Activated T-helper 2 cell treated with anti-CD3 and anti-CD28 coated beads, Interferon-gamma antibody, Interleukin-2, Interleukin-4, amounts not matched to agents 10 μg/mL and 5 μg/mL and 100 μg/mL, durations not matched to agents 14 hours and 24 hours and 36 hours (primary cell): ENCODE measurements at regions of chr19 and their contacts with region 1.

Region 1: DNA sequence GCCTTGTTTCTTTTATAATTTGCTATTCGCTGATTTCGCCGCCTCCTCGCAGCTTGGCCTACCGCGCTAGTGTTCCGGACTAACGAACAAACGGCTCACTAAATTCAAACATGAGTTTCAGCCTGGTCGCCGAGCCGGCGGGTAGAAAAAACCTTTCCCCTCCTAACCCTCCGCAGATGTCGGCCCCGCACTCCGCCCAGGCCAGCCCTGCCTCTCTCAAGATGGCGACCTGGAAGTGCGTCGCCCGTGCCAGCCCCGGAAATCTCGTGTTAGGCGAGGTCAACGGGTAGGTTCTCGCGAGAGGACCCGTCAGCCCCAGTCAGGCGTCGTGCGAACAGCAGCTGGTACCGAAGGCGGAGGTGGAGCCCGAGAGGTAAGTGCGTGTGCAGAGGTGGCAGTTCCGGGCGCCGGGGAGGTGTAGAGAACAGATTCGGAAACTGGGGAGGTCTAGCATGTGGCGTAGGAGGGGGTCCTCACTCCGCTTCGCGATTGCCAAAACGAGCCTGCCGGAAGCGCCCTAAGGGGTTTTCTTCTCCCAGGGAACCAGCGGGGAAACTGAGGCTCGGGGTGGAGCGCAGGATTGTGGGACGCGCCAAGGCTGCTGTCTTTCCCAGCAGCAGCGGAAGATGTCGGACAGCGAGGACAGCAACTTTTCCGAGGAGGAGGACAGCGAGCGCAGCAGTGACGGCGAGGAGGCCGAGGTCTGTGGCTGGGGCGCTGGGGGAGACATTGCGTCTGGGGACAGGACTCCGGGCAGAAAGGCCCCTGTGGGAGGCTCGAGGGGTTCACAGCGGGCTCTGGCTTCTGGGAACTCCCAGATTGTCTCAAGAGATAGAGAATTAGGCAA is at the start of gene SUPT5H:
- DNase-seq: peak; percentile 98
- H3K4me3 Mint-ChIP-seq: peak within 1 kb of the TSS; percentile 95
- H3K27ac Mint-ChIP-seq: peak within 1 kb of the TSS; percentile 94
- H3K4me1 Mint-ChIP-seq: peaks cover 34% of the 10 kb centered on the region
- H3K27me3 Mint-ChIP-seq: no peaks in the 10 kb centered on the region
- total RNA-seq, gene SUPT5H: 163 and 169 TPM in 2 replicates

Region 2: GRCh38 chr19:39351537-39352064 is 93.9 kb before region 1 on chr19:
- intact Hi-C with region 1: no loop called
- DNase-seq: peak; percentile 52
- H3K4me3 Mint-ChIP-seq: no peak overlapping the region
- H3K27ac Mint-ChIP-seq: peak overlapping the region; percentile 91
- H3K4me1 Mint-ChIP-seq: peaks cover 38% of the 10 kb centered on the region
- H3K27me3 Mint-ChIP-seq: no peaks in the 10 kb centered on the region

Region 3: GRCh38 chr19:39412100-39412866 is 33.2 kb before region 1 on chr19 and contains the start of gene PLEKHG2:
- intact Hi-C with region 1: no loop called
- DNase-seq: peak; percentile 96
- H3K4me3 Mint-ChIP-seq: peak within 1 kb of the TSS; percentile 97
- H3K27ac Mint-ChIP-seq: peak within 1 kb of the TSS; percentile 90
- H3K4me1 Mint-ChIP-seq: peaks cover 38% of the 10 kb centered on the region
- H3K27me3 Mint-ChIP-seq: no peaks in the 10 kb centered on the region
- total RNA-seq, gene PLEKHG2: 49.8 and 50.7 TPM in 2 replicates

Region 4: GRCh38 chr19:39480337-39481228 is 35.1 kb after region 1 on chr19 and contains the start of gene TIMM50:
- intact Hi-C with region 1: loop called (anchors 2 kb)
- DNase-seq: peak; percentile 96
- H3K4me3 Mint-ChIP-seq: peak within 1 kb of the TSS; percentile 97
- H3K27ac Mint-ChIP-seq: peak within 1 kb of the TSS; percentile 84
- H3K4me1 Mint-ChIP-seq: peaks cover 24% of the 10 kb centered on the region
- H3K27me3 Mint-ChIP-seq: no peaks in the 10 kb centered on the region
- total RNA-seq, gene TIMM50: 110 and 115 TPM in 2 replicates

Region 5: GRCh38 chr19:39539519-39540332 is 94.2 kb after region 1 on chr19 and contains the start of gene EID2:
- intact Hi-C with region 1: loop called (anchors 1 kb)
- DNase-seq: peak; percentile 93
- H3K4me3 Mint-ChIP-seq: peak within 1 kb of the TSS; percentile 94
- H3K27ac Mint-ChIP-seq: peak within 1 kb of the TSS; percentile 93
- H3K4me1 Mint-ChIP-seq: peaks cover 25% of the 10 kb centered on the region
- H3K27me3 Mint-ChIP-seq: no peaks in the 10 kb centered on the region
- total RNA-seq, gene EID2: 17.2 and 18.3 TPM in 2 replicates

Region 6: GRCh38 chr19:39671738-39672363 is 226.4 kb after region 1 on chr19:
- intact Hi-C with region 1: loop called (anchors 2 kb)
- DNase-seq: peak; percentile 31
- H3K4me3 Mint-ChIP-seq: no peak overlapping the region
- H3K27ac Mint-ChIP-seq: no peak overlapping the region
- H3K4me1 Mint-ChIP-seq: peaks cover 22% of the 10 kb centered on the region
- H3K27me3 Mint-ChIP-seq: peaks cover 22% of the 10 kb centered on the region